Gastrocnemius medialis (tissue), 4 donors: ENCODE measurements at regions of chr11 and their contacts with region 1.

Region 1: GRCh38 chr11:31107062-31107461 is 262.5 kb downstream of the DCDC1 start:
- DNase-seq: peak in 1 of 2 donors; percentile 9
- ATAC-seq: no peak
- H3K4me3 ChIP-seq: no peak overlapping the region
- H3K27ac ChIP-seq: no peak overlapping the region
- H3K4me1 ChIP-seq: no peaks in the 10 kb centered on the region
- H3K27me3 ChIP-seq: no peaks in the 10 kb centered on the region
- CTCF ChIP-seq: peak in 3 of 5 experiments; percentile 45 to 58 (median 51)
- POLR2A ChIP-seq: no peak

Region 2: GRCh38 chr11:31141789-31142188 is 34.7 kb after region 1 on chr11:
- in situ Hi-C with region 1: no loop called
- intact Hi-C with region 1: no loop called
- DNase-seq: no peak
- ATAC-seq: no peak
- H3K4me3 ChIP-seq: no peak overlapping the region
- H3K27ac ChIP-seq: no peak overlapping the region
- H3K4me1 ChIP-seq: no peaks in the 10 kb centered on the region
- H3K27me3 ChIP-seq: no peaks in the 10 kb centered on the region
- CTCF ChIP-seq: no peak
- POLR2A ChIP-seq: no peak

Region 3: GRCh38 chr11:31865606-31866300 is 758.7 kb after region 1 on chr11:
- in situ Hi-C with region 1: loop called in 1 of 4 experiments (anchors 25 kb)
- intact Hi-C with region 1: loop called (anchors 10 kb)
- DNase-seq: no peak
- ATAC-seq: no peak
- H3K4me3 ChIP-seq: no peak overlapping the region
- H3K27ac ChIP-seq: no peak overlapping the region
- H3K4me1 ChIP-seq: no peaks in the 10 kb centered on the region
- H3K27me3 ChIP-seq: no peaks in the 10 kb centered on the region
- CTCF ChIP-seq: no peak
- POLR2A ChIP-seq: no peak

Region 4: DNA sequence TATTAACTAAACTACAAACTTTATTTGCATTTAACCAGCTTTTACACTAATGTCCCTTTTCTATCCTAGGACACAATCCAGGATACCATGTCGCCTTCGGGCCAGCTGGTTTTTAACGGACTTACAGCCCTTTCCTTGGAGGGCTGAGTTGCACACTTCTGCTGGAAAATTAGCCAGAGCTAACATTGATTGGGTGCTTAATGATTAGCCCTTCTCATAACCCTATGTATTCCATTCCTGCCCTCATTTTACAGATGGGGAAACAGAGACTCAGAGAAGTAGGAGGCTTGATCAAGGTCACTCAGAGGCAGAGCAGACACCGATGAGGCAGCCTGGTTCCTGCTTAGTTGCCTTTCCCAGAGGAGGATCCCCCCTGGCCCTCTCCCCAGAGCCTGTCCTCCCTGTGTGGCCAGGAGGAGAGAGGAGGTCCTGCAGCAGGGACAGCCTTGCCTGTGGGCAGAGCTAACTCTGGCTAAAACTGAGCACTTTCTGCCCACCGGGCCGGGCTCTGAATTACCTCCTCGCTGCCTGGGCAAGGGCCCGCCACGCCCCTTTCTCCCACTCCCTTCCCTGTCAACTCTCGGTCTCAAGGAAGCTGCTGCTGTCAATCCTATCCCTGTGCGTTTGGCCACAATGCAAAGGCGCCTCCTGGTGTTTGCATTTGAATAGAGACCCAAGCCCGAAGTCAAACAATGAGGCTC is 763.7 kb after region 1 on chr11:
- in situ Hi-C with region 1: loop called in 1 of 4 experiments (anchors 25 kb)
- intact Hi-C with region 1: loop called (anchors 10 kb)
- DNase-seq: peak; percentile 5 to 14
- ATAC-seq: no peak
- H3K4me3 ChIP-seq: no peak overlapping the region
- H3K27ac ChIP-seq: no peak overlapping the region
- H3K4me1 ChIP-seq: no peaks in the 10 kb centered on the region
- H3K27me3 ChIP-seq: peaks cover 0 to 3% (median 0%) of the 10 kb centered on the region in 3 donors
- CTCF ChIP-seq: peak; percentile 23 to 60 (median 43)
- POLR2A ChIP-seq: no peak

Region 5: DNA sequence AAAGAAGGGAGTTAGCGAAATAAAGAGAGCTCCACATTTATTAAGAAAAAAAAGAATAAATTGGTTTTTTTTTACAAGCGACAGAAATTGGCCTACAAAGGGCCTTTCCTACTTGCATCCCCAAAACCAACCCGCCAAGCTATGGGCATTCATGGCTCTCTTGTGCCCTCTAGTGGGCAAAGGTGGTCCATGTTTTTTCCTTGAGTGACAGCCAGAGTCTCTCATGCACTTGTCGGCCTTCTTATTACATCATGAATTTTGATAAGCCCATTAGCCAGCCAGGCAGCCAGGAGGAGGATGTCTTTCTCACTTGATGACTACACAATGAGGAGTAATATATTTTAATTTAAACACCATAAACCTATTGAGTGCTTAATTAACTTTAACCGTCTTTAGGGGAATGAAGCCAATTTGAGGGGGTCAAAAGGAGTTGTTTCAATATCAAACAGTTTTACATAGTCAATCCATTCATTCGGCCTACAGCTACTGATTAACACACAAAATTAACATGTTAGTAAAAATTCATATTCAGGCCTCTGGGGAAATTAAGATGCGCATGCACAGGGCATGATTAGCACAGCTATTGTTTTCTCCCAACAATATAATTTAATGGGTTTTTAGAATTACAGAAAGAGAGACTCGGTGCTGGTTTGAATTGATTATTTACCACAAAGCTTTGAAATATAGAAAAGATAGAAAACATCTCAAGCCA is 1069.3 kb after region 1 on chr11:
- in situ Hi-C with region 1: no loop called
- intact Hi-C with region 1: loop called (anchors 5 kb)
- DNase-seq: peak; percentile 49 to 60
- ATAC-seq: peak; percentile 64 to 79
- H3K4me3 ChIP-seq: no peak overlapping the region
- H3K27ac ChIP-seq: no peak overlapping the region
- H3K4me1 ChIP-seq: peaks cover 5 to 15% of the 10 kb centered on the region in 2 donors
- H3K27me3 ChIP-seq: no peaks in the 10 kb centered on the region
- CTCF ChIP-seq: peak; percentile 71 to 84 (median 76)
- POLR2A ChIP-seq: no peak